Mucosa of descending colon (tissue), 3 donors: ENCODE measurements at regions of chr5 and their contacts with region 1.

Region 1: GRCh38 chr5:45521067-45521466 is 175.1 kb downstream of the HCN1 start:
- DNase-seq: peak in 2 of 3 donors; percentile 51 to 81
- ATAC-seq: peak; percentile 76
- H3K4me3 ChIP-seq: no peak overlapping the region
- H3K4me1 ChIP-seq: no peaks in the 10 kb centered on the region
- CTCF ChIP-seq: no peak

Region 2: GRCh38 chr5:44660251-44660650 is 860.8 kb before region 1 on chr5:
- intact Hi-C with region 1: no loop called
- DNase-seq: no peak
- ATAC-seq: no peak
- H3K4me3 ChIP-seq: no peak overlapping the region
- H3K4me1 ChIP-seq: no peaks in the 10 kb centered on the region
- CTCF ChIP-seq: no peak

Region 3: DNA sequence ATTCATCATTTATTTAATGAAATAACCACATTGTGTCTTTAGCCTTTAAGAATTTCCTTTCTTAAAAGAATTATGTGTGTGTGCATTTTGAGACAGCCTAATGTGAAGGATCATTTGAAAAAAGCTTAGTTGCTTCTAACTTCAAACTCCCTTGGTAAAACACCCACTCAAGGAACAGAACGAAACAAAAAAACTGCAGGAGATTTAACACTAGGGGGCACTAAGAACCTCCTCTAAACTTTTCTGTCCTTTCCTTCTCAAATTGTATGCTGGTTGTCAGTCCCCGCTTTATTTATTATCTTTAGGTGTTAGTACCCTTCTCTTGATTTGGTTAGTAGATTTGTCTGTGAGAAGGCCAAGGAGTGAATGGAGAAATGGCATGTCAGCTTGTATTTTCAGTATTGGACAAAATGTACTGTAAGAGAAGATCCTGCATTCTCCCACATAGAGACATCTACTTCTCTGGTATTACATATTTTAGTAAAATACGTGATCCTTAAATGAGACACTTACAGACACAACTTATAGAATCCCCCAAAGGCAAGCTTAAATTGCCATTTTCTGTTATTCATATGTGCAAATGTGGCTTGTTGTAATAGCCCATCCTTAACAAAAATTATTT is 482.6 kb before region 1 on chr5:
- intact Hi-C with region 1: loop called in 1 of 2 experiments (anchors 1 kb)
- DNase-seq: peak in 1 of 3 donors; percentile 10
- ATAC-seq: peak; percentile 53
- H3K4me3 ChIP-seq: no peak overlapping the region
- H3K4me1 ChIP-seq: no peaks in the 10 kb centered on the region
- CTCF ChIP-seq: no peak

Region 4: GRCh38 chr5:45411971-45412612 is 109.0 kb before region 1 on chr5:
- intact Hi-C with region 1: no loop called
- DNase-seq: no peak
- ATAC-seq: no peak
- H3K4me3 ChIP-seq: no peak overlapping the region
- H3K4me1 ChIP-seq: peaks cover 4% of the 10 kb centered on the region
- CTCF ChIP-seq: no peak